ENCODE measurements at regions of chr2 and their contacts with region 1.

Region 1: DNA sequence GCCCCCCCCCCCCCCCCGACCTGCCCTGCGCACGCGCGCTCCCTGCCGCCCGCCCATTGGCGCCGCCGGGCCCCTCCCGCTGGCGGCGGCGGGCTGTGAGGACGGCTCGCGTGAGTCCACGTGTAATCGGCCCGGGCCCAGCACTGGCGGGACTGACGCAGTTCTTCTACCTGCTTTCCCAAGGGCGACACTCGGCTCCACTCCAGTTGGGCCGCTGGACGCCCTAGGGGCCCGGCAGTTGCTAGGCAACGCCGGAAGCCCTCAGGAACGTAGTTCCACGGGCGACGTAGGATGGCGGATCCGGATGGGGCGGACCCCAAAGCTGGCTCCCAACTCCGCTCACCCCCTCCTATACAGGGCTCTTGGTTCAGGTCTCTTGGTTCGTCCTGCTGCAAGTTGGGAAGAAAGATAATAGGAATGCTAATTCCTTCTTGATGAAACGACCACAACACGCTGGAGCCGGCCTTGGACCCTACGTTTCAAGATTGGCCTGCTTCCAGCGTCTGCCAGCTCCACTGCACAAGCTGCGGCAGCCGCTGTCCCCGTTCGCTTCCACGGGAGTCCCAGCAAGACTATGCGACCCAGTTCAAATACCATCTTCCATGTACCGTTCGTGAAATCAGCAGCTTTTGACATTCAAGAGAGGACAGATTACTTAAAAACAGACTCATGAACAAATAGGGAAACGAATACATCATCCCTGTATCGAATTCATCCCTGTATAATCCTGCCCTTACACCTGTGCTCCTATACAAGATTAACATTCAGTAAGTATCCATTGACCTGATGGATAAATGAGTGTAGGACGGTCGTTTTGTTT is 415 bp upstream of the MCFD2 start:
- DNase-seq: peak; percentile 80 to 90 (median 86)
- ATAC-seq: peak; percentile 91
- H3K4me3 ChIP-seq: peak overlapping the region; percentile 94
- H3K4me3 Mint-ChIP-seq: peak overlapping the region; percentile 86 to 98 (median 93)
- H3K27ac ChIP-seq: peak overlapping the region; percentile 98
- H3K27ac Mint-ChIP-seq: peak overlapping the region; percentile 80 to 97 (median 90)
- H3K4me1 ChIP-seq: peaks cover 22 to 26% of the 10 kb centered on the region in 2 donors
- H3K4me1 Mint-ChIP-seq: peaks cover 34 to 67% (median 52%) of the 10 kb centered on the region in 7 donors
- H3K27me3 ChIP-seq: no peaks in the 10 kb centered on the region
- H3K27me3 Mint-ChIP-seq: no peaks in the 10 kb centered on the region

Region 2: DNA sequence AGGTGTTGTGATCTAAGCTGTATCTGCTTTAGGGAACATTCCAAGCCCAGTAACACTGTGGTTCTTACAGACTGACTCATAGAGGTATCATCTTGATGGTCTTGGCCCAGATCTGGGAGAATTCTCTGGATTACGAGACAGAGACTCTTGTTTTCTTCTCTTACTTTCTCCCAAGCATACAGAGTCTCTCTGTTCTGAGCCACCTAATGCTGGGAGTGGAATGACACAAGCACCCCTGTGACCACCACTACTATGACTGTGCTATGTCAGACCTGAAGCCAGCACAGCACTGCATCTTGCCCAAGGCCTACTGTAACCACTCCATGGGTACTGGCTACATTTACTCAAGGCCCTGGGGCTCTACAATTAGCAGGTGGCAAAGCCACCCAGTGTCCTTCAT is 699.8 kb before region 1 on chr2:
- CTCF ChIA-PET with region 1: no interaction called
- POLR2A ChIA-PET with region 1: no interaction called
- intact Hi-C with region 1: no loop called
- DNase-seq: no peak
- ATAC-seq: no peak
- H3K4me3 ChIP-seq: no peak overlapping the region
- H3K4me3 Mint-ChIP-seq: no peak overlapping the region
- H3K27ac ChIP-seq: no peak overlapping the region
- H3K27ac Mint-ChIP-seq: no peak overlapping the region
- H3K4me1 ChIP-seq: no peaks in the 10 kb centered on the region
- H3K4me1 Mint-ChIP-seq: peaks cover 0 to 6% (median 0%) of the 10 kb centered on the region in 7 donors
- H3K27me3 ChIP-seq: no peaks in the 10 kb centered on the region
- H3K27me3 Mint-ChIP-seq: peaks cover 0 to 58% (median 21%) of the 10 kb centered on the region in 5 donors

Region 3: GRCh38 chr2:46942139-46942517 is 26.1 kb after region 1 on chr2:
- CTCF ChIA-PET with region 1: interaction called, 9 read pairs
- POLR2A ChIA-PET with region 1: no interaction called
- intact Hi-C with region 1: loop called in 1 of 2 experiments (anchors 1 kb)
- DNase-seq: peak; percentile 53 to 79 (median 56)
- ATAC-seq: peak; percentile 68
- H3K4me3 ChIP-seq: peak overlapping the region; percentile 93
- H3K4me3 Mint-ChIP-seq: peak overlapping the region; percentile 90 to 100 (median 98)
- H3K27ac ChIP-seq: peak overlapping the region; percentile 94
- H3K27ac Mint-ChIP-seq: peak overlapping the region; percentile 89 to 99 (median 97)
- H3K4me1 ChIP-seq: peaks cover 22 to 43% of the 10 kb centered on the region in 2 donors
- H3K4me1 Mint-ChIP-seq: peaks cover 24 to 73% (median 64%) of the 10 kb centered on the region in 7 donors
- H3K27me3 ChIP-seq: no peaks in the 10 kb centered on the region
- H3K27me3 Mint-ChIP-seq: no peaks in the 10 kb centered on the region

Region 4: GRCh38 chr2:47272031-47272864 is 356.2 kb after region 1 on chr2:
- CTCF ChIA-PET with region 1: no interaction called
- POLR2A ChIA-PET with region 1: no interaction called
- intact Hi-C with region 1: loop called (anchors 1 kb)
- DNase-seq: peak; percentile 4 to 71 (median 51)
- ATAC-seq: peak; percentile 90
- H3K4me3 ChIP-seq: no peak overlapping the region
- H3K4me3 Mint-ChIP-seq: peak overlapping the region; percentile 20 to 77 (median 60)
- H3K27ac ChIP-seq: no peak overlapping the region
- H3K27ac Mint-ChIP-seq: no peak overlapping the region
- H3K4me1 ChIP-seq: no peaks in the 10 kb centered on the region
- H3K4me1 Mint-ChIP-seq: peaks cover 0 to 11% (median 2%) of the 10 kb centered on the region in 7 donors
- H3K27me3 ChIP-seq: no peaks in the 10 kb centered on the region
- H3K27me3 Mint-ChIP-seq: peaks cover 0 to 7% (median 0%) of the 10 kb centered on the region in 5 donors

Region 5: DNA sequence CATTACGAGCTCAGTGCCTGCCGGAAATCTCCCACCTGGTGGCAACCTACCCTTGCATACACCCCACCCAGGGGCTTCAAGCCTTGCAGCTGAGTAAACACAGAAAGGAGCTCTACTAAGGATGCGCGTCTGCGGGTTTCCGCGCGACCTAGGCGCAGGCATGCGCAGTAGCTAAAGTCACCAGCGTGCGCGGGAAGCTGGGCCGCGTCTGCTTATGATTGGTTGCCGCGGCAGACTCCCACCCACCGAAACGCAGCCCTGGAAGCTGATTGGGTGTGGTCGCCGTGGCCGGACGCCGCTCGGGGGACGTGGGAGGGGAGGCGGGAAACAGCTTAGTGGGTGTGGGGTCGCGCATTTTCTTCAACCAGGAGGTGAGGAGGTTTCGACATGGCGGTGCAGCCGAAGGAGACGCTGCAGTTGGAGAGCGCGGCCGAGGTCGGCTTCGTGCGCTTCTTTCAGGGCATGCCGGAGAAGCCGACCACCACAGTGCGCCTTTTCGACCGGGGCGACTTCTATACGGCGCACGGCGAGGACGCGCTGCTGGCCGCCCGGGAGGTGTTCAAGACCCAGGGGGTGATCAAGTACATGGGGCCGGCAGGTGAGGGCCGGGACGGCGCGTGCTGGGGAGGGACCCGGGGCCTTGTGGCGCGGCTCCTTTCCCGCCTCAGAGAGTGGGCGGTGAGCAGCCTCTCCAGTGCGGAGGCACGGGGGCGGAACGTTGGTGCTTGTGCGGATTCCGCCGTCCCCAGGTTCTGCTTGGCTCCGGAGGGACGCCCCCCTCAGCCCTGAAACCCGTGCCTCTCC is 487.0 kb after region 1 on chr2 and contains the start of gene MSH2:
- CTCF ChIA-PET with region 1: no interaction called
- POLR2A ChIA-PET with region 1: no interaction called
- intact Hi-C with region 1: loop called (anchors 2 to 10 kb)
- DNase-seq: peak; percentile 72 to 94 (median 91)
- ATAC-seq: peak; percentile 97
- H3K4me3 ChIP-seq: peak within 1 kb of the TSS; percentile 90
- H3K4me3 Mint-ChIP-seq: peak within 1 kb of the TSS; percentile 90 to 100 (median 98)
- H3K27ac ChIP-seq: peak within 1 kb of the TSS; percentile 77
- H3K27ac Mint-ChIP-seq: peak within 1 kb of the TSS; percentile 81 to 96 (median 91)
- H3K4me1 ChIP-seq: peaks cover 9 to 12% of the 10 kb centered on the region in 2 donors
- H3K4me1 Mint-ChIP-seq: peaks cover 32 to 49% (median 40%) of the 10 kb centered on the region in 7 donors
- H3K27me3 ChIP-seq: no peaks in the 10 kb centered on the region
- H3K27me3 Mint-ChIP-seq: peaks cover 0 to 2% (median 0%) of the 10 kb centered on the region in 5 donors
- total RNA-seq, gene MSH2: 12.2 to 44.7 (median 31.4) TPM

Region 6: DNA sequence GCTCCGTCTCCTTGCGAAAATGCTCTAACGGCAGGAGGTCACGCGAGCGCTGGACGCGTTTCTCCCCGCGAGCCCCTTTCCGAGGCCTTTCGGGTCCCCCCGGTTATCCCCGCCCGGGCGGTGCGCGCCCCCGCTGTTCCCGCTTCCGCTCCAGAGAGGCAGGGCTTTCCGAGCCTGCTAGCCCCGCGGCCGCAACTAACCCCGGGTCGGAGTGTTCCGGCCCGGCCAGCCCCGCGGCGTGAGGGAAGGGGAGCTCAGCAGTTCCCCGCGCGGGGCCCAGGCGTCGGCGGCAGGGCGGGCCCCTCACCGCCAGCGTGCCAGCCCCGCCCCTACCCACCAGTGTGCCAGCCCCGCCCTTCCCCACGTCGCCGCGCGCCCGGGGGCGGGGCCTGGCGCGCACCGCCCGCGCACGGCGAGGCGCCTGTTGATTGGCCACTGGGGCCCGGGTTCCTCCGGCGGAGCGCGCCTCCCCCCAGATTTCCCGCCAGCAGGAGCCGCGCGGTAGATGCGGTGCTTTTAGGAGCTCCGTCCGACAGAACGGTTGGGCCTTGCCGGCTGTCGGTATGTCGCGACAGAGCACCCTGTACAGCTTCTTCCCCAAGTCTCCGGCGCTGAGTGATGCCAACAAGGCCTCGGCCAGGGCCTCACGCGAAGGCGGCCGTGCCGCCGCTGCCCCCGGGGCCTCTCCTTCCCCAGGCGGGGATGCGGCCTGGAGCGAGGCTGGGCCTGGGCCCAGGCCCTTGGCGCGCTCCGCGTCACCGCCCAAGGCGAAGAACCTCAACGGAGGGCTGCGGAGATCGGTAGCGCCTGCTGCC is 866.9 kb after region 1 on chr2 and contains the start of gene MSH6:
- CTCF ChIA-PET with region 1: no interaction called
- POLR2A ChIA-PET with region 1: no interaction called
- intact Hi-C with region 1: loop called (anchors 1 to 10 kb)
- DNase-seq: peak; percentile 85 to 93 (median 92)
- ATAC-seq: peak; percentile 97
- H3K4me3 ChIP-seq: peak within 1 kb of the TSS; percentile 97
- H3K4me3 Mint-ChIP-seq: peak within 1 kb of the TSS; percentile 70 to 97 (median 92)
- H3K27ac ChIP-seq: peak within 1 kb of the TSS; percentile 94
- H3K27ac Mint-ChIP-seq: peak within 1 kb of the TSS; percentile 62 to 93 (median 87)
- H3K4me1 ChIP-seq: peaks cover 5 to 8% of the 10 kb centered on the region in 2 donors
- H3K4me1 Mint-ChIP-seq: peaks cover 7 to 39% (median 24%) of the 10 kb centered on the region in 7 donors
- H3K27me3 ChIP-seq: no peaks in the 10 kb centered on the region
- H3K27me3 Mint-ChIP-seq: no peaks in the 10 kb centered on the region
- total RNA-seq, gene MSH6: 20.5 to 82.3 (median 41.8) TPM

Measured in naive thymus-derived CD4-positive, alpha-beta T cell (primary cell).